Prostate gland (tissue), 2 donors: ENCODE measurements at regions of chr1 and their contacts with region 1.

Region 1: GRCh38 chr1:119613769-119614720 is 34.0 kb downstream of the ZNF697 start:
- DNase-seq: peak; percentile 86
- H3K4me3 ChIP-seq: no peak overlapping the region
- H3K27ac ChIP-seq: no peak overlapping the region
- H3K4me1 ChIP-seq: peaks cover 8% of the 10 kb centered on the region
- H3K27me3 ChIP-seq: no peaks in the 10 kb centered on the region
- CTCF ChIP-seq: peak; percentile 39 to 85 (median 82)
- POLR2A ChIP-seq: no peak

Region 2: DNA sequence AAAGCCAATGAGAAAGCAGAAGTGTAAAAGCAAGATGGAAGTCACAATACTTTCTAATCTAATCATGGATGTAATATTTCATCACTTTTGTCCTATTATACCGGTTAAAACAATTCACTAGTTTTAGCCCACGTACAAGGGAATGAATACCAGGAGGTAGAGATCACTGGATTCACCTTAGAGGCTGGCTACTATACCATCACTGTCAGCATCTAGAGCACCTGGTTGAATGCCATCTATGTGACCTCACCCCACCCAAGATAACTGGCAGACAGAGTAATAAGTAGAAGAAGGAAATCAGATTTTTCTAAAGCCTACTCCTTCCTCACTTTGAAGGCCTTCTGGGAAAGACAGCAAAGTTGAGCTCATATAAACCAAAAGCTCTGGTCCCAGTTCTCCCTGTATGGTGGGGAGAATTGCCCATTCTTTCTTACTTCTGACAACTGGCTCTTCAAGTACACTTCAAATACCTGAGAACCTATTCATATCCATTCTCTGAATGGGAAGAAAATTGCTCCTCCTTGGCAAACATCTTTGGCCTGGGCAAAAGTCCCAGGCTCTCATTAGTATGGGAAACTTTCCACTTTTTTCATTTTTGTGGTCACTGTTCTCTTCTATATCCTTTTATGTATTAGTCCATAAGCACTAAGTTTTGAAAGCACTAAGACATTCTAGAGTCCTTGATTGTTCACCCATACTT is 82.3 kb before region 1 on chr1:
- intact Hi-C with region 1: no loop called
- DNase-seq: no peak
- H3K4me3 ChIP-seq: no peak overlapping the region
- H3K27ac ChIP-seq: no peak overlapping the region
- H3K4me1 ChIP-seq: no peaks in the 10 kb centered on the region
- H3K27me3 ChIP-seq: no peaks in the 10 kb centered on the region
- CTCF ChIP-seq: no peak
- POLR2A ChIP-seq: no peak

Region 3: GRCh38 chr1:119662034-119662437 is 48.0 kb after region 1 on chr1:
- intact Hi-C with region 1: loop called (anchors 2 kb)
- DNase-seq: no peak
- H3K4me3 ChIP-seq: no peak overlapping the region
- H3K27ac ChIP-seq: peak overlapping the region; percentile 77 to 83
- H3K4me1 ChIP-seq: peaks cover 14% of the 10 kb centered on the region
- H3K27me3 ChIP-seq: no peaks in the 10 kb centered on the region
- CTCF ChIP-seq: no peak
- POLR2A ChIP-seq: no peak